HEK293 (cell line): ENCODE measurements at regions of chr12 and their contacts with region 1.

Region 1: GRCh38 chr12:56224102-56224701 is at the start of gene NABP2:
- H3K4me3 ChIP-seq: peak within 1 kb of the TSS; percentile 77
- H3K27ac ChIP-seq: peak within 1 kb of the TSS; percentile 64
- H3K4me1 ChIP-seq: peaks cover 12% of the 10 kb centered on the region; the same call in 1 of the 2 replicates
- CTCF ChIP-seq: peak; percentile 98

Region 2: DNA sequence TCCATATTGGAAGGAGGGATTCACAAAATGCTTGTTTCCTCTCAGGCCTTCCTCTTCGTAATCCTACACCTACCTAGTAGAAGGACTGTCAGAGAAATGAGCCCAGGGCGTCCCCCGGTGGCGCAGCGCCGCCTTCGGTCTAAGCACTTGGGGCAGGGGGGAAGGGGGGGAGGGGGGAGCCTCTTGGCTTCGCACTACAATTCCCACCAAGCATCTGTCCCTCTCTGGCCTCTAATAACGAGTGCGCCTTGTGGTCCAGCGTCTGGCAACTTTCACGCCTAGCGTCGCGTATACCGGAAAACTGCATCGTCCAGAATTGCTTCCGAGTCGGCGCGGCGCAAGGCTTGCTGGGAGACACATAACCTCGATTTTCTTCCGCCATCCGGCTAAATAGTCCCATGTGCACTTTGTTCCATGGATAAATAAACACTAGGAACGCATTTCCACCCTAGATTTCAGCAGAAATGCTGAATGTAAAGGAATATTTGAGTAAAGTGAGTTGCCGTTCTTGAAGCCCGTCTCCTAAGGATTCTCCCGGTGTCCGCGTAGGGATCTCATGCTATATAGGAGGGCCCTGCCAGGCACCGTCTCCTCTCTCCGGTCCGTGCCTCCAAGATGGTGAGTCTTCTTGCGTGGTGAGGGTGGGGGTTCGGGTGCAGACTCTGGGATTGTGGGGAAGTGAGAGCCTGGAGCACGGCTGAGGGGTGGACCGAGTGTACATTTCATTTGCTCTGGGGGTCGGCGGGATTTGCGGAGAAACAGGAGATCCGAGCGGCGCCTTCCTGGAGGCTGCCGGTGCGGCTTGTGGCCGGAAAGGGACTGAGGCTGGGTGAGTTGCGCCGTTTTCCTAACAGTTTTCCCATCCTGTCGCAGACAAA is 182.4 kb before region 1 on chr12 and contains the start of gene RPS26:
- CTCF ChIA-PET with region 1: no interaction called
- POLR2A ChIA-PET with region 1: no interaction called
- H3K4me3 ChIP-seq: peak within 1 kb of the TSS; percentile 75
- H3K27ac ChIP-seq: peak within 1 kb of the TSS; percentile 93
- H3K4me1 ChIP-seq: peaks cover 19% of the 10 kb centered on the region
- CTCF ChIP-seq: peak; percentile 57

Region 3: DNA sequence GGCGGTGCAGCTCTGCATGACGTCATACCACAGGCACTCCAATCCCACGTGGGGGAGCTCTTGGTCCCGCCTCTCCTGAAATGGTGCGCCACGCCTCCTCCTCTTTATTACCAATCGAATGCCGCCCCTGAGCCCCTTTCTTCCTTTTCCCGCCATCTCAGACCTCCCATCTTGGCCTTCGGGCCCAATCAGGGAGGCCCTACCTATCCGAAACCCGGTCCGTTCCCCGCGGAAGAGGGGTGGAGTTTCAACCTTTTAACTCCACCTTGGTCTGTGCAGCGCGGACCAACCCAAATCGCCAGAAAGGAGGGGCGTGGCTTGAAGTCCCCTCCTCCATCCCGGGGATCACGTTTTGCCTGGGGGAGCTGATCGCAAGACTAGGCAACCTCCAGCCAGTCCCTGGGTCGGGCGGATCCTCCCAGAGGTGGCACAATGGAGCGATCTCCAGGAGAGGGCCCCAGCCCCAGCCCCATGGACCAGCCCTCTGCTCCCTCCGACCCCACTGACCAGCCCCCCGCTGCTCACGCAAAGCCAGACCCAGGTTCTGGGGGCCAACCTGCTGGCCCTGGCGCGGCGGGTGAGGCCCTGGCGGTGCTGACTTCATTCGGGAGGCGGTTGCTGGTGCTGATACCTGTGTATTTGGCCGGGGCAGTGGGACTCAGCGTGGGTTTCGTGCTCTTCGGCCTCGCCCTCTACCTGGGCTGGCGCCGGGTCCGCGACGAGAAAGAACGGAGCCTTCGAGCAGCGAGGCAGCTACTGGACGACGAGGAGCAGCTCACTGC is 96.1 kb before region 1 on chr12 and contains the start of gene ESYT1:
- CTCF ChIA-PET with region 1: interaction called, 4 read pairs
- POLR2A ChIA-PET with region 1: interaction called, 24 read pairs
- H3K4me3 ChIP-seq: peak within 1 kb of the TSS; percentile 80
- H3K27ac ChIP-seq: peak within 1 kb of the TSS; percentile 57
- H3K4me1 ChIP-seq: peaks cover 9% of the 10 kb centered on the region
- CTCF ChIP-seq: peak; percentile 67; the same call in 1 of the 2 replicates

Region 4: DNA sequence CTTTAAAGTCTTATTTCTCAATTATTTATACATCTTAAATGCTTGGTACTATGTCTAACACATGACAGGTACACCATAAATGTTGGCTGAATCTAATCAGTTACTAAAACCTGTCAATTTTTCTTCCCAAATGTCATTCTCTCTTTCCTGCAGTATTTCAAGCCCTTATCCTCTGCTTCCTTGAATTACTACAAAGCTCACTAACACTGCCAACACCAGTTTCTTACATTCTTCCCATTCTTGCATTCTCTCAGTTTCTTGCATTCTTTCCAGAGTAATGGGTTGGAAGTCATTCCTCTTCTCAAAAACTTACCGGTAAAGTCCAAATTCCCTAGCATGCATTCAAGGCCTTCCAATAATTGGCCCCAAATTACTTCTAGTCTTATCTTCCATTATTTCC is 25.4 kb before region 1 on chr12:
- CTCF ChIA-PET with region 1: interaction called, 8 read pairs
- POLR2A ChIA-PET with region 1: interaction called, 21 read pairs
- H3K4me3 ChIP-seq: no peak overlapping the region
- H3K27ac ChIP-seq: no peak overlapping the region
- H3K4me1 ChIP-seq: no peaks in the 10 kb centered on the region
- CTCF ChIP-seq: no peak

Region 5: DNA sequence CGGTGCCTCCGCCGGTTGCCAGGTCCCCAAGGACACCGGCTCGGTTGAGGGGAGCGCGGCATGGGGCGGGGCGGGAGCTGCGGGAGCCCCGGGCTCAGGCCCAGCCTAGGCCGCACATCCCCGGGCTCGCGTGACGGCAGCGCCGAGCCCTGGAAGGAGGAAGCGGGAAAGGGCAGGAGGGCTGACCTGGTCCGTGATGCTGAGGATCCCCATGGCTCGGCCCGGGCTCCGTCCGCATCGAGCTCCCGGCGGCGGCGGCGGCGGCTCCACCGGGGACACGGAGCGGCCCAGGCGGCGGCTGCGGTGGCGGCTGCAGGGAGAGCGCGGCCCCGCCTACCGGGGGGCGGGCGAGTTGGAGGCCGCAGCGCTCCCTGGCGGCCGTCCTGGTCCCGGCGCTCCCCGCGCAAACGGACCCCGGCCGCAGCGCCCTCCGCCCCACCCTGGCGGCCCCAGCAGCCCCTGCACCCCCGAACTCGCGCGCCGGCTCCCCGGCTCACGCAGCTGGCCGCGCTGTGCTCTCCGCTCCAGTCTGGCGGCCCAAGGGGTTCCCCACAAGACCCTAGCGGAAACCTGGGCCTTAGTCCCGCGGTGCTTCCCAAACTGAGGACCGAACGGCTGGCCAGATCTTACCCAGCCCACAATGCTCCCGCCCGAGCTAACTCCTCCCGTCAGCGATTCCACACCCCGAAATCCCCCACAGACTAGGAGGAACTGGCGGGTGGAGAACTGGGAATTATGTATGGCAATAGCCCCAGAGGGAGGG is 34.0 kb after region 1 on chr12 and contains the start of gene ANKRD52:
- CTCF ChIA-PET with region 1: interaction called, 9 read pairs
- POLR2A ChIA-PET with region 1: interaction called, 14 read pairs
- H3K4me3 ChIP-seq: peak within 1 kb of the TSS; percentile 92
- H3K27ac ChIP-seq: peak within 1 kb of the TSS; percentile 90
- H3K4me1 ChIP-seq: peaks cover 13% of the 10 kb centered on the region
- CTCF ChIP-seq: no peak

Region 6: DNA sequence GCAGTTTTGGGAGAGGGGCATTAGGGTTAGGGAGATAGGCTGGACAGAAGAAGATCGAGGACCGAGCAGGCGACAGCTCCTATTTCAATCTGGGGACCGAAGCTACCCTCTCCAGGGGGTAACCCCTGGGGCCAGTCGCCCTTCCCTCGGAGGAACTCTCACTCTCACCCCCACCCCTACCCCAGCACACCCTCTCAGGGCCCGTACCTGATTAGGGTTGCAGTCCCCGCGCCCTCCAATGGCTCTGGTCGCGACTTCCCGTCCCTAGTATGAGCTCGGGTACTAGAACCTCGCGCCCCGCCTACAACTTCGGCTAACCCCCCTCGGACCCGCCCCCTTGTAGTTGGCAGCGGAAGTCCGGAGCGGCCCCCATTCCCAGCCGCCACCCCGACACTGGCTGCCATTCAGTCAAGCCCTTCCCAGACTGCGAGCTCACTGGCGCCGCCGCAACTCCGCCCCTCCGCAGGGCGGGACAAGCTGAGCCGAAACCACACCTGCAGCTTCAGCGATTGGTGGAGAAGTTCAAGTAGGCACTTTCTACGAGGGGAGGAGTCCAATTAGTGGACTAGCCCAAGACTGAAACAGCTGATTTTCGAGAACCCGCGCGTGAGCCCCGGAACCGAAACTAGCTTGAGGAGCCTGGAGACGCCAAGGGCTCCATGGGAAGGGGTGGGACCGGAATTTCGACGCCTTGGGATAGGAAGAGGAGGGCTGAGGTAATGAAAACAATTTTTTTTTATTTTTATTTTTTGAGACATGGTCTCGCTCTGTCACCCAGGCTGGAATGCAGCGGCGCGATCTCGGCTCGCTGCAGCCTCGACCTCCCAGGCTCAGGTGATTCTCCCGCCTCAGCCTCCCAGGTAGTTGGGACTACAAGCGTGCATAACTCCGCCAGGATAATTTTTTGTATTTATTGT is 135.9 kb after region 1 on chr12 and contains the start of gene STAT2:
- CTCF ChIA-PET with region 1: interaction called, 4 read pairs
- POLR2A ChIA-PET with region 1: interaction called, 14 read pairs
- H3K4me3 ChIP-seq: peak within 1 kb of the TSS; percentile 84
- H3K27ac ChIP-seq: peak within 1 kb of the TSS; percentile 53
- H3K4me1 ChIP-seq: no peaks in the 10 kb centered on the region; the same call in 1 of the 2 replicates
- CTCF ChIP-seq: no peak